ENCODE measurements at regions of chr2 and their contacts with region 1.

Region 1: GRCh38 chr2:86221066-86221684 is 21.9 kb downstream of the MRPL35 start:
- DNase-seq: no peak
- ATAC-seq: peak; percentile 81
- H3K4me3 ChIP-seq: no peak overlapping the region
- H3K27ac ChIP-seq: no peak overlapping the region
- H3K4me1 ChIP-seq: peaks cover 18% of the 10 kb centered on the region
- H3K27me3 ChIP-seq: no peaks in the 10 kb centered on the region
- CTCF ChIP-seq: peak; percentile 91 to 99 (median 96)
- EP300 ChIP-seq: no peak
- POLR2A ChIP-seq: no peak
- RAD21 ChIP-seq: peak; percentile 99

Region 2: GRCh38 chr2:85826990-85827878 is 393.9 kb before region 1 on chr2:
- CTCF ChIA-PET with region 1: interaction called, 8 read pairs
- POLR2A ChIA-PET with region 1: interaction called, 3 read pairs
- RAD21 ChIA-PET with region 1: interaction called, 10 read pairs
- SMC1A ChIA-PET with region 1: interaction called, 5 read pairs
- in situ Hi-C with region 1: no loop called
- intact Hi-C with region 1: no loop called
- DNase-seq: no peak
- ATAC-seq: peak; percentile 98
- H3K4me3 ChIP-seq: no peak overlapping the region
- H3K27ac ChIP-seq: no peak overlapping the region
- H3K4me1 ChIP-seq: no peaks in the 10 kb centered on the region
- H3K27me3 ChIP-seq: no peaks in the 10 kb centered on the region; a peak in 1 of 4 replicates
- CTCF ChIP-seq: peak; percentile 77 to 89 (median 88); a peak in 5 of 6 replicates
- EP300 ChIP-seq: no peak
- POLR2A ChIP-seq: no peak
- RAD21 ChIP-seq: peak; percentile 85

Region 3: DNA sequence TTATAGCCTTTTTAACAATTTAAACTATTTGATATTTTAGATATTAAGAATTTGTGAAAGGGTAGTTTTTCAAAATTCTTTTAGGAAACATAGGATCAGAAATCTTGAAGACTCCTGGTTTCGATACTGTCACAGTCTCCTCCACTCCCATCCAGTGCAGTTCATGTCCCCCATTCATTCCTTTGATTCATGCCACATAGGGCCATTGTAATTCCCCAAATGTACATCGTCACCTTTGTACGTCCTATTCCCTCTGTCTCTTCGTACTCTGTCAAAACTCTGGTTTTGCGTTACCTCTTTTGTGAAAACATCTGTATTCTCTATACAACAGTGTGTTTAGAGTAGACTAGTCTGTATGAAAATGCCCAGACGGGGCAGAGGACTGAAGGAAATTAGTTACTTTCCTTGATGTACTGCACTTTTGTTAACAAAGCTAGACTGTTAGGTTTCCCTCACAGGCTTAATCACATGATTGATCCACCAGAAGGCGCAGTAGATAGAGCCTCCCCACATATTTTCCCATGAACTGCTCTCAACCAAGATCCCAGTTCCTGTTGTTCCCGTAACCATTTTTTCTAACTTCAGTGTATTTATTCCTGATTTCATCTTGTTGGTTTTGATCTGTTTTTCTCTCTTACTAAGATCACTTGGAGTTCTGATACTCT is 19.4 kb before region 1 on chr2:
- CTCF ChIA-PET with region 1: interaction called, 19 read pairs
- POLR2A ChIA-PET with region 1: interaction called, 3 read pairs
- RAD21 ChIA-PET with region 1: interaction called, 5 read pairs
- SMC1A ChIA-PET with region 1: interaction called, 12 read pairs
- in situ Hi-C with region 1: no loop called
- intact Hi-C with region 1: no loop called
- DNase-seq: no peak
- ATAC-seq: no peak
- H3K4me3 ChIP-seq: 0 out of 2 replicates have a peak overlapping the region, but pooled peaks have one; percentile 16
- H3K27ac ChIP-seq: no peak overlapping the region
- H3K4me1 ChIP-seq: peaks cover 8% of the 10 kb centered on the region
- H3K27me3 ChIP-seq: no peaks in the 10 kb centered on the region
- CTCF ChIP-seq: no peak
- EP300 ChIP-seq: no peak
- POLR2A ChIP-seq: no peak
- RAD21 ChIP-seq: no peak

Region 4: GRCh38 chr2:86249579-86250391 is 28.6 kb after region 1 on chr2:
- CTCF ChIA-PET with region 1: interaction called, 36 read pairs
- POLR2A ChIA-PET with region 1: interaction called, 3 read pairs
- RAD21 ChIA-PET with region 1: interaction called, 17 read pairs
- SMC1A ChIA-PET with region 1: interaction called, 28 read pairs
- in situ Hi-C with region 1: no loop called
- intact Hi-C with region 1: no loop called
- DNase-seq: peak; percentile 52
- ATAC-seq: peak; percentile 93
- H3K4me3 ChIP-seq: no peak overlapping the region
- H3K27ac ChIP-seq: peak overlapping the region; percentile 39; the same call in 1 of the 2 replicates
- H3K4me1 ChIP-seq: peaks cover 15% of the 10 kb centered on the region
- H3K27me3 ChIP-seq: no peaks in the 10 kb centered on the region
- CTCF ChIP-seq: peak; percentile 48 to 67 (median 53); a peak in 5 of 6 replicates
- EP300 ChIP-seq: peak in 1 of 2 experiments; percentile 74; a peak in 2 of 4 replicates
- POLR2A ChIP-seq: no peak
- RAD21 ChIP-seq: peak; percentile 64

Region 5: GRCh38 chr2:86290596-86291327 is 69.6 kb after region 1 on chr2:
- CTCF ChIA-PET with region 1: interaction called, 278 read pairs
- POLR2A ChIA-PET with region 1: no interaction called
- RAD21 ChIA-PET with region 1: interaction called, 181 read pairs
- SMC1A ChIA-PET with region 1: interaction called, 178 read pairs
- in situ Hi-C with region 1: loop called (anchors 5 kb)
- intact Hi-C with region 1: no loop called
- DNase-seq: no peak
- ATAC-seq: no peak
- H3K4me3 ChIP-seq: no peak overlapping the region
- H3K27ac ChIP-seq: no peak overlapping the region
- H3K4me1 ChIP-seq: no peaks in the 10 kb centered on the region
- H3K27me3 ChIP-seq: no peaks in the 10 kb centered on the region; a peak in 1 of 4 replicates
- CTCF ChIP-seq: no peak
- EP300 ChIP-seq: no peak
- POLR2A ChIP-seq: no peak
- RAD21 ChIP-seq: no peak

Region 6: GRCh38 chr2:86358957-86359356 is 137.8 kb after region 1 on chr2:
- CTCF ChIA-PET with region 1: interaction called, 232 read pairs
- POLR2A ChIA-PET with region 1: interaction called, 4 read pairs
- RAD21 ChIA-PET with region 1: interaction called, 14 read pairs
- SMC1A ChIA-PET with region 1: interaction called, 12 read pairs
- in situ Hi-C with region 1: loop called (anchors 5 kb)
- intact Hi-C with region 1: no loop called
- DNase-seq: peak; percentile 51
- ATAC-seq: peak; percentile 99
- H3K4me3 ChIP-seq: no peak overlapping the region
- H3K27ac ChIP-seq: no peak overlapping the region
- H3K4me1 ChIP-seq: peaks cover 4% of the 10 kb centered on the region; the same call in 1 of the 2 replicates
- H3K27me3 ChIP-seq: no peaks in the 10 kb centered on the region
- CTCF ChIP-seq: no peak
- EP300 ChIP-seq: 0 out of 4 replicates have a peak, but pooled peaks of 1 of the 2 experiments have one; percentile 29
- POLR2A ChIP-seq: no peak
- RAD21 ChIP-seq: no peak

Measured in GM12878 (cell line).